HEK293T (cell line): ENCODE measurements at regions of chr14 and their contacts with region 1.

Region 1: DNA sequence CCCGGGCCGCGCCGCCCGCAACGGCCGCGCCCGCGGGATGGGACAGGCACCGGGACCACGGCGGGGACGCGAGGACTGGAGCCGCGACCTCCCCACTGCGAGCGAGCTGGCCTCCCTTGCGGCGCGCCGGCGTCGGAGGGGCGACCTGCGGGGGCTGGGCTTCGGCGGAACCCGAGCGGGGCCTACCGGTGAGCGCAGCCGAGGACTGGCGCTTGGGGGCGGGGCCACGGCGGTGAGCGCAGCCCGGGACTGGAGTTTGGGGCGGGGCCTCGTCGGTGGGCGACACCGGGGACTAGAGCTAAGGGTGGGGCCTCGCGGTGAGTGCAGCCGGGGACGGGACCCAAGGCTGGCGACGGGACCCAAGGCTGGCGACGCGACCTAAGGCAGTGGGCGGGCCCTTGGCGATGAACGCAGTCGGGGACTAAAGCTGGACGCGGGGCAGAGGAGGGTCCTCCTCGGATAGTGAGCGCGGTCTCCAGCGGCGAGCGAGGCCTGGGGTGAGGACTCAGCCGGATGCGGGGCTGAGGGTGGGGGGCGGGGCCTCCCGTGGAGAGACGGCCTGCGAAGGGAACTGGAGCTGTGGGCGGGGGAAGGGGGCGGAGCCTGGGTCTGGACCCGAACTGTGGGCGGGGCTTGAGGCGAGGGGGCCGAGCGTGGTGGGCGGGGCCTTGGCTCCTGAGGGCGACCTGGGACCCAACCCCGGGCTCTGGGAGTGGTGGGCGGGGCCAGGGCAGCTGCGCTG is at the start of gene BRF1:
- DNase-seq: peak; percentile 99

Region 2: DNA sequence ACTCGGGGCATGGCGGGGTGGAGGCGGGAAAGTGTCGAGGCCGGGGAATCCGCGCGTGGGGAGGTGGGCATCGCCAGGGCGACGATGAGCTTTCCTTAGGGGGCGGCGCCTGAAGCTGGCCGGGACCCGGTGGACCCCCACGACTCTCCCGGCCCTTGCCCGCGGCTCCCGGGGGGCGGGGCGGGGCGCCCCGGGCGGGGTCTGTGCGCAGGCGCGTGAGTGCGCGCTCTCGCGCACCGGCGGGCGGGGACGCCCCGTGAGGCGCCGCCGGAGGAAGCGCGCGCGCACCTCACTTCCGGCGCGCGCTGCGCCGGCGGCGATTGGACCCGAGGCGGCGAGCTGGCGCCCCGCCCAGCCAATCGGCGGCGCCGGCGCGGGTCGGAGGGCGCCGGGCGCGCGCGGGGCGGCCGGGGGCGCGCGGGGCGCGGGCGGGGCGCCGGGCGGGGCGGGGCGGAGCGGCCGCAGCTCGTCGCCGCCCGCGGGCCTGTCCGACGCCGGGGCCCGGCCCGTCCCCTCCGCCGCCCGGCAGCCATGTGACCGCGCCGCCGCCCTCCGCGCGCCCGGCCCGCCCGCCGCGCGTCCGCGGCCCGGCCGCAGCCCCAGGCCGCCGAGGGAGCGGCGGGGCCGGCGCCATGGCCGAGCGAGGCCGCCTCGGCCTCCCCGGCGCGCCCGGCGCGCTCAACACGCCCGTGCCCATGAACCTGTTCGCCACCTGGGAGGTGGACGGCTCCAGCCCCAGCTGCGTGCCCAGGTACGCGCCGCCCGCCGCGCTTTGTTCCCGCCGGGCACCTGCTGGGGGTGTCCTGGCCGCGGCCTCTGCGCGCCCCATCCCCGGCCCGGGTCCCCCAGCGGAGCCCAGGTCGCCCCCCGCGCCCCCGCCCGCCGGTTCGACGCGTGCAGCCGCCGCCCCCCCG is 13.6 kb after region 1 on chr14 and contains the start of gene PACS2:
- CTCF ChIA-PET with region 1: no interaction called
- POLR2A ChIA-PET with region 1: interaction called, 37 read pairs
- DNase-seq: peak; percentile 97